Prostate gland (tissue), 2 donors: ENCODE measurements at regions of chr6 and their contacts with region 1.

Region 1: DNA sequence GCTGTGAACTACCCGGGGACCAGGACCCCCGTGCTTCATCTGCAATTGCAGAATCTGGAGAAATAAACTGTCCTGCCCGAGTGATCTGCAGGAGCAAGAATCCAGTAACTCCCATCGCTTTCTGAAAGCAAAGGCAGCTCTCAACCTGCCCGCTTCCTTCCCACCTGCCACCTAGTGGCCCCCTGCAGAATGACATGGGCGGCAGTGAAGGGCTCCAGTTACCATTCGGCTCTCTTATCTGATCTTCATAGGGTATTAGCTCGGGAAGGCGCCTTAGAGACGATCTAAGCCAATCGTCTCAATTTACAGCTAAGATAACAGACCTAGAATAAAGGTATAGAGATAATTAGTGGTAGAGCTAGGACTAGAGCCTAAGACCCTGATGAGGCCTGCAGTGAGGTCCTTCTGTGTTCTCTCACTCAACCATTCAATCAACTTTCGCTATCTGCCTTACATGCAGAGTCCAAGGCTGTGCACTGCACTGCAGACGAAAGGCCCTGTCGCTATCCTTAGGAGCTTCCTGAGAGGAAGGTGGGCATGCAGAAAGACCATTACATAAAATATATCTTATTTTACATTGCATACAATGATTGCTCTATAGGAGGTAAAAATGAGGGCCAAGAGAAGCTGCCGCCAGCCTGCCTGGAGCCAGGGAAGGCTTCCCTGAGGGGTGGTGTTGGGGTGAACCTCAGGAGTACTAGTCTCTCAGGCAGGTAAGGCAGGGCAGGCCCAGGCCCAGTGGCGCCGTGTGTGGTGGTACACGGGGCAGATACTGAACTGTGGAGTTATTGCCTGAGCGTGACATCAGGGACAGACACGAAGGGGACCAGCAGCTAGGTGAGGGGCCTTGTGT is 7.1 kb upstream of the PSMG4 start:
- DNase-seq: peak; percentile 80
- H3K4me3 ChIP-seq: no peak overlapping the region
- H3K27ac ChIP-seq: no peak overlapping the region
- H3K4me1 ChIP-seq: peaks cover 2% of the 10 kb centered on the region
- H3K27me3 ChIP-seq: no peaks in the 10 kb centered on the region
- CTCF ChIP-seq: peak; percentile 85 to 96 (median 95)
- POLR2A ChIP-seq: no peak

Region 2: DNA sequence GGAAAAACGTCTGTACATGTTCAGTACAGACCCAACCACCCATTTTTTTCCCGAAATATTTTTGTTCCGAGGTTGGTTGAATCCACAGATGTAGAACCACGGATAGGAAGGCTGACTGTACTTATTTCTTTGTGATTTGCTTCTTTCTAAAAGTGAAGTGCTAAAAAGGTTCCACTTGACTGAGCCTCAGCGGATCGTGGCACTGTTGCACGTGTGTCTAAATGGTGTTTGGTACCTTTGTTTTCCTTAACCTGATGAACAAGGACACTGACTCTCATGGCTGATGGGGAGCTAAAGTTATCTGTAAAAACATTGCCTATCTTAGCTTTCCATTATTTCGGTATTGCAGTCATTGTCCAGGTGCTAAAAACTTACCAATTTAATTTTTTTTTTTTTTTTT is 127.0 kb before region 1 on chr6:
- intact Hi-C with region 1: loop called (anchors 5 kb)
- DNase-seq: no peak
- H3K4me3 ChIP-seq: no peak overlapping the region
- H3K27ac ChIP-seq: no peak overlapping the region
- H3K4me1 ChIP-seq: no peaks in the 10 kb centered on the region
- H3K27me3 ChIP-seq: no peaks in the 10 kb centered on the region
- CTCF ChIP-seq: no peak
- POLR2A ChIP-seq: no peak

Region 3: DNA sequence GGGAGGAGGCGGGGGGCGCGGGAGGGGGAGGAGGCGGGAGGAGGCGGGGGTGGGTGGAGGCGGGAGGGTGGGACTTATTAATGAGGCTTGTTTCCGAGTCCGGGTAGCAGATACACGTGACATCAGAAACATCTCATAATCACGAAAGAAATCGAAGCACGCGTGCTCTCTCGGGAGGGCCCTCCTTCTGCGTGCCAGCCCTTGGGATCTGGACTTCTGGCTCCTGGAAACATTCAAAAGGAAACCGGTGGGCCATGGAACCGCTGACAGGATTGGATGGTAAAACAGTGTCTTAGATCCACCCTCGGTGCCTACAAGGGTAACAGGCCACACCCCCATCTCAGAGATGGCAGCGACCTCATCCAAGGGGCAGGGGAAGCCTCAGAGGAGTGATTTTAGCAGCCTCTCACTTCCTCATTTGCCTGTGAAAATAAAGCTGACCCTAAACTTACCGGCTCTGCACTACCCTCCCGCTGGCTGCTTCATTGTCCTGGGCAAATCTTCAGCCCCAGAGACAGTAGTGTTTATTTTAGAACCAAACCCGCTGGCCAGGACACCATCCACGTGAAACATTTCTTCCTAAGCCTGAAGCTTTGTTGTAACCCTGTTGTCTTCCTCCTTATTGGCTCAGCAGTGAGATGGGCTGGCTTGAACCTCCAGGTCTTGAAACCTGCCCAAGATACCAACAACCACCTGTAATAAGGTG is 104.5 kb after region 1 on chr6:
- intact Hi-C with region 1: no loop called
- DNase-seq: peak; percentile 88
- H3K4me3 ChIP-seq: peak overlapping the region; percentile 13 to 22
- H3K27ac ChIP-seq: peak overlapping the region; percentile 94
- H3K4me1 ChIP-seq: peaks cover 26% of the 10 kb centered on the region
- H3K27me3 ChIP-seq: no peaks in the 10 kb centered on the region
- CTCF ChIP-seq: no peak
- POLR2A ChIP-seq: no peak

Region 4: GRCh38 chr6:3471711-3472110 is 220.0 kb after region 1 on chr6:
- intact Hi-C with region 1: no loop called
- DNase-seq: no peak
- H3K4me3 ChIP-seq: no peak overlapping the region
- H3K27ac ChIP-seq: no peak overlapping the region
- H3K4me1 ChIP-seq: no peaks in the 10 kb centered on the region
- H3K27me3 ChIP-seq: no peaks in the 10 kb centered on the region
- CTCF ChIP-seq: no peak
- POLR2A ChIP-seq: no peak